Endothelial cell of umbilical vein (primary cell): ENCODE measurements at regions of chr15 and their contacts with region 1.

Region 1: DNA sequence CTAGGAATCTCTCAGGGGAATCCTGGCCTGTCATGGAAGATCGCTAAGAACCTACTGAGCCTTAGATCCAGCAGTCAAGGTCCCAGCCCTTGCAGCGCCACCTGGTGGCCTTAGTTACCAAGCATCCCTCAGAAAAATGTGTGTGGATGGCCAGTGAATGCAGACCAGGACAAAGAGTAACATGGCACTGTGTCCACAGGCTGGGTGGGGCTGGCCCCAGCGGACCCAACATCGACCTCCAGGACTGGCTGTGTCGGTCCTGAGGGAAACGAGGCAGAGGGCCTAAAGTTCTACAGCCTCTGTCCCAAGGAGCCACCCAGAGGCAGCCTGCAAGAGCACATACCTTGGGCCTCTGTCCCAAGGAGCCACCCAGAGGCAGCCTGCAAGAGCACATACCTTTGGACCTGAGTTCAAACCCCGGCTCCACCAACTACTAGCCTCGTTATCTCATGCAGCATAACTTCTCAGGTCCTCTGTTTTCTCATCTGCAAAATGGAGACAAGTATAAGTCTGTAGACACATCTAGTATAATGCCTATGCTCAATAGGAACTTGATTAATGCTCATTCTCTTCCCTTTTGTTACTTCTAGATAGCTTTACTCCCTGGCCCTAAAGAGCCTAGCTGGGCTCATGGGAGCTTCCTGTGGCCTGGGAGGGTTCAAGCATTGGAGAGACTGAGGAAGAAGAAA is 57.5 kb upstream of the HERC1 start:
- DNase-seq: peak; percentile 90
- H3K4me3 ChIP-seq: no peak overlapping the region
- H3K27ac ChIP-seq: no peak overlapping the region
- H3K4me1 ChIP-seq: peaks cover 2% of the 10 kb centered on the region
- H3K27me3 ChIP-seq: no peaks in the 10 kb centered on the region
- CTCF ChIP-seq: peak; percentile 80
- POLR2A ChIP-seq: no peak

Region 2: DNA sequence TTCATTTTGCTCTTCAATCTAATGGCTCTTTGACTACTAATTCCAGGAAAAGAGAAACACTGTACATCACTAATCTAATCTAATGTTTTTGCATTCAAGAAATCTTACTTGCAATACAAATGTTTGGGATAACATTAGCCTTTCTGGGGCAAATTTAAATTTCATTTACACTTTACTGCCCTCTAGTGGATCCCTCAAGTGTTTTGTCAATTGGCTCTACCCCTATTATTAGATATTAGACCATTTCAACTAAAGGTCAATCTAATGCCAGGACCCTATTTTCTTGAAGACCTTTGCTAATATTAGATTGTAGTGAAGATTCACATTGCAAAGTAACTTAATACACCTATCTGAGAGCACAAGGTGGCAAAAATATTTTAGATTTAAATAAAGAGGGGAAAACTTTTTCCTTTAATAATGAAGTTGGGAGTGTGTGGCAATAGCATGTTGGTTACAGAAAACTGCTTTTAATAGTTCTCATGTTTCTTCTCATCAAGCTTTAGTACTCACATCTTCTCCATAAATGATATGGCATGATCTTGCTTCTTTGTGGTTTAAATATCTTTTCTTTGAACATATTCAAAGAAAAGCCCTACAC is 1819.4 kb before region 1 on chr15:
- CTCF ChIA-PET with region 1: no interaction called
- POLR2A ChIA-PET with region 1: no interaction called
- dilution Hi-C with region 1: no loop called
- intact Hi-C with region 1: no loop called
- DNase-seq: peak; percentile 63
- H3K4me3 ChIP-seq: no peak overlapping the region
- H3K27ac ChIP-seq: no peak overlapping the region
- H3K4me1 ChIP-seq: peaks cover 15% of the 10 kb centered on the region
- H3K27me3 ChIP-seq: no peaks in the 10 kb centered on the region
- CTCF ChIP-seq: peak; percentile 40 to 44
- POLR2A ChIP-seq: no peak

Region 3: GRCh38 chr15:63818191-63818590 is 73.0 kb before region 1 on chr15:
- CTCF ChIA-PET with region 1: interaction called, 11 read pairs
- POLR2A ChIA-PET with region 1: no interaction called
- dilution Hi-C with region 1: no loop called
- intact Hi-C with region 1: no loop called
- DNase-seq: peak; percentile 87
- H3K4me3 ChIP-seq: no peak overlapping the region
- H3K27ac ChIP-seq: no peak overlapping the region
- H3K4me1 ChIP-seq: peaks cover 13% of the 10 kb centered on the region
- H3K27me3 ChIP-seq: no peaks in the 10 kb centered on the region
- CTCF ChIP-seq: peak; percentile 7 to 11
- POLR2A ChIP-seq: no peak

Region 4: DNA sequence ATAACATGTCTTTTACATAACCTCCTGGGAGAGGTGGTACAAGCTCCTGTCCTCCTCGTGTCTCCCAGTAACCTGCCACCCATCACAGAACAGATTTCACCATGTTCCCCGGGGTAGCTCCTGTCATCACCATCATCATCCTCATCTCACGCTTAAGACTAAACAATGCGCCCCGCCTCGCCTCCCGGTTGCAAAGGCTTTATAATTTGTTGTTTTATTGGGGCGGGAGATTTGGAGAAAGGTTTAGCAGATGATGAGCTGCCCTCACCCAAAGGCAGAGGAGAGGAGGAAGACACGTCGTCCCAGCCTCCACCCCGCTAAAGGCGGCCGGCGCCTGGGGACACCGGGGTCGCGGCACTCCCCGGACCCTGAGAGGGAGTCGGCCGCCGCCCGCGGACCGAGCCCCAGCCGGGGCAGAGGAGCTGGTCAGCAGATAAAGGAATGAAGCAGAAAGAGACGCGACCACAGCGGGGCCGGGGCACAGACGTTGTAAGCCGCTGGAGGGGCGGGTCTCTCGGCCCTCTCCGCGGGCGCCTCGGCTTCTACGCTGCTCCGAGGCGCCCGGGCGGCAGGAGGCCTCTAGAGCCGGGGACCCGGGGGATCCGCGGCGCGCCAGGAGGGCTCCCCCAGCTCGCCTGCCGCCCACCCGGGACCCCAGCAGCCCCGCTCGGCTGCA is 58.1 kb before region 1 on chr15:
- CTCF ChIA-PET with region 1: interaction called, 6 read pairs
- POLR2A ChIA-PET with region 1: no interaction called
- dilution Hi-C with region 1: no loop called
- intact Hi-C with region 1: loop called (anchors 1 kb)
- DNase-seq: no peak
- H3K4me3 ChIP-seq: peak overlapping the region; percentile 61 to 93 (median 90)
- H3K27ac ChIP-seq: peak overlapping the region; percentile 94
- H3K4me1 ChIP-seq: peaks cover 35% of the 10 kb centered on the region
- H3K27me3 ChIP-seq: no peaks in the 10 kb centered on the region
- CTCF ChIP-seq: no peak
- POLR2A ChIP-seq: no peak

Region 5: DNA sequence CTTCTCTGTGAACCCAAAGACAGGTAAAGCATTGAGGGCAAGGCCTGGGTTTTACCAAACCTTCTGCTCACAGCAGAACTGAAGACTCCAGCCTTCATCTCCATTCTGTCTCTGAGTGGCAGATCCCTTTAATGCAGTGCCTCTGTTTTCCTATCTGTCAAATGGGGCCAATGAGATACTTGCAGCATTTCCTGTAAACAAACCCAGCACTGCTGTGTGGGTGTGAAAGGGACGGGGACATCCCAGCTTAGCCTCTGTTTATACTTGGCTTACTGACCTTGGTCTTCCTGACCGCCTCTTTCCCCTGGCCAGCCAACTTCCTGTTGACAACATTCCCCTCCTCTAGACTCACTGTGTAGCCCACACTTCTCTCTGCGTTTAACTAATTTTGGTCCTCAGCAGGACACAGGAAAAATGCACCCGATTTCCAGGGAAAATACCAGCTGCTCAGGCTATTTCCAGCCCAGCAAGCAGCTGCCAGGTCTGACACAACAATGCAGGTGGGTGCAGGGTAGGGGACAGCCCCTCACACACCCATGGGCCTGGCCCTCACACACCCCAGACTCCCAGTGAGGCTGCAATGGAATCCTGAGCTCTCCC is 48.4 kb after region 1 on chr15:
- CTCF ChIA-PET with region 1: interaction called, 3 read pairs
- POLR2A ChIA-PET with region 1: no interaction called
- dilution Hi-C with region 1: no loop called
- intact Hi-C with region 1: loop called (anchors 1 kb)
- DNase-seq: peak; percentile 98
- H3K4me3 ChIP-seq: no peak overlapping the region
- H3K27ac ChIP-seq: peak overlapping the region; percentile 73
- H3K4me1 ChIP-seq: peaks cover 38% of the 10 kb centered on the region
- H3K27me3 ChIP-seq: no peaks in the 10 kb centered on the region
- CTCF ChIP-seq: no peak
- POLR2A ChIP-seq: no peak

Region 6: DNA sequence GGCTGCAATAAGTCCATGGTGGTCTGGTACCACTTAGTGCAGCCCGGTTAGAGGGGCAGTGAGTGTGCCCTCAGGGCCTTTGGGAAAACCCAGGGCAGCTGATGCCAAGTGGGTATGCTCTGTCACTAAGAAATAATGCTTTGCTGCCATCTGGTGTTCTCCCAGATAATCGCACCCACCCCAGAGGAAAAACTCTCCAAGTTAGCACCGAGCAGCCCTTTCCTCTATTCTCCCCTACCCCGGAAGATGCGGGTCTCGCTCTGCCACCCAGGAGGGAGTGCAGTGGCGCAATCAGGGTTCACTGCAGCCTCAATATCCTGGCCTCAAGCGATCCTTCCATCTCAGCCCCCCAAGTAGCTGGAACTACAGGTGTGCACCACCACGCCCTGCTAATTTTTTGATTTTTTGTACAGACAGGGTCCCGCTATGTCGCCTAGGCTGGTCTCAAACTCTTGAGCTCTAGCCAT is 176.4 kb after region 1 on chr15:
- CTCF ChIA-PET with region 1: interaction called, 6 read pairs
- POLR2A ChIA-PET with region 1: no interaction called
- dilution Hi-C with region 1: no loop called
- intact Hi-C with region 1: loop called (anchors 1 kb)
- DNase-seq: peak; percentile 64
- H3K4me3 ChIP-seq: no peak overlapping the region
- H3K27ac ChIP-seq: no peak overlapping the region
- H3K4me1 ChIP-seq: peaks cover 17% of the 10 kb centered on the region
- H3K27me3 ChIP-seq: no peaks in the 10 kb centered on the region
- CTCF ChIP-seq: peak; percentile 63 to 81
- POLR2A ChIP-seq: no peak